Transverse colon (tissue), 4 donors: ENCODE measurements at regions of chr5 and their contacts with region 1.

Region 1: DNA sequence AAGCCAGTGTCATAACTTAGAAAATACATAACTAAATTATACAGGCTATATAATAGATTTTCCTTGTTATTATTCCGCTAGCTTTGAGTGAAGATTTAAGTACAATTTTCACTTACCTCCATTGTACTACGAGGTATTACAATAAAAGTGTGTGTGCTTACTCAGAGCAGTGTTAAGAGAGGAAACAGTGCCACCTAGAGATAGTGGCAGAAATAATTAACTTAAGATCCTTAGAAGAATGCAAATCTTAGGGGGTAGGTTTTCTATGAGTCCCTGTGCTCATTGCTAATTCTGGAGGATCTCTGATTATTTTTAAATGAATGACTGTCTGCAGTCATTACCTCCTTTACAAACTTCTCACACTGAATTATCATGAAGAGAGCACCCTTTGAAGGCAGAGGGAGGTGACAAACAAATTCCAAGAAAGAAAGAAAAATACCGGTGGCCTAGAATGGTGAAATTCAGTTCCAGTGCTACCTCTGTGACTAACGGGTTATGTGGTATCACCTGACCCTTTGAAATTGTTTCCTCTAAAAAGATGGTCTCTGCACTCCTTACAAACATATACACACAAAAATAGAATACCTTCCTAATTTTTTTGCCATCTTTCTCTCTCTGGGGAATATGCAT is 379.8 kb downstream of the TRIM36 start:
- DNase-seq: no peak
- H3K4me3 ChIP-seq: no peak overlapping the region
- H3K27ac ChIP-seq: no peak overlapping the region
- H3K4me1 ChIP-seq: no peaks in the 10 kb centered on the region
- H3K27me3 ChIP-seq: no peaks in the 10 kb centered on the region
- CTCF ChIP-seq: peak in 4 of 5 experiments; percentile 12 to 30 (median 22)
- EP300 ChIP-seq: no peak
- POLR2A ChIP-seq: no peak

Region 2: DNA sequence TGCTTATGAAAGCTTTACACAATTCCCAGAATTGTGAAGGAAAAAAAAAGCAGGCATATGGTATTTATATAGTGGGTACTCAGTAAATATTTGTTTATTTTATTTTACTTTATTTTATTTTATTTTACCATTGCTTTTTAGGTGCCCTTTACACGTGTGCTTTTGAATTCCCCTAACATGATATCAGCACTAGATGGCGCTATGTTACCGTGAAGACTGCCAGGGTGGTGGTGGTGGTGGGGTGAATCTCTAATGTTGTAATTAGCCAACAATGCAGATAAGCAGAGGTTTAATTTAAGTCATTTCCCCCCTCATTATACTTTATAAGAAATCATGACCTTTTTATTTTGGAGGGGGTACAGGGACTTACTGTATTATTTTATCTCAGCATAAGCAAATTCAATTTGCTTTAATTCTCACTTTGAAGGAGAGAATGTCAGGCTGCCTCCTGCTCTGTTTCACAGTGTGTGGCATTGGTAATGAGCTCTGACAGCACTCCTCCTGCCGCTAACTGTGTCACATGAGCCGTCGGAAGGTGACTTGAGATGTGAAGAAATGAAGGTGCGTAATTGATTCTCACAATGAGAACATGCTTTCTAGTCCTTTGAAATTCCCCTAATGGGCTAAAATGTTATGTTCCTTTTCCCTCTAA is 1110.8 kb before region 1 on chr5:
- in situ Hi-C with region 1: loop called in 1 of 4 experiments (anchors 25 kb)
- intact Hi-C with region 1: no loop called
- DNase-seq: peak; percentile 9
- H3K4me3 ChIP-seq: no peak overlapping the region
- H3K27ac ChIP-seq: no peak overlapping the region
- H3K4me1 ChIP-seq: no peaks in the 10 kb centered on the region
- H3K27me3 ChIP-seq: no peaks in the 10 kb centered on the region
- CTCF ChIP-seq: peak; percentile 59 to 68 (median 66)
- EP300 ChIP-seq: no peak
- POLR2A ChIP-seq: no peak

Region 3: DNA sequence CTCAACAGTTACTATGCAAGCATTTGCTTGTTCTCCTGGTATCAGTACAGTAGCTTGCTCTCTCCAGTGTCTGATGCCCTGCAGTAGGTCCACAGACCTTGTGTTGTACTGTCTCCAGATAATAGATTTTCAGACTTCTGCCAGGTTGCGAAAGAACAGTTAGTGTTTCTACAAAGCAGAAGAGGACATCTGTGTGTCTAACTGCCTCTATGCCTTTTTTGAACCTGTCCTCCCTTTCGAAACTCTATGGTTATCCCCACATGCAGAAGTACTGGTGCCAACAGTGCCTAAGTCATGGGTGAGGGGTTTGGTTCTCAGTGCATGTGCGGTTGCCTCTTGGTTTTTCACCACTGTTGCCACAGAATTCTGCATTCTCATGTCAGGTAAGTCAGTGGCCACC is 382.1 kb before region 1 on chr5:
- in situ Hi-C with region 1: no loop called
- intact Hi-C with region 1: no loop called
- DNase-seq: no peak
- H3K4me3 ChIP-seq: no peak overlapping the region
- H3K27ac ChIP-seq: no peak overlapping the region
- H3K4me1 ChIP-seq: peaks cover 0 to 3% (median 0%) of the 10 kb centered on the region in 4 donors
- H3K27me3 ChIP-seq: no peaks in the 10 kb centered on the region
- CTCF ChIP-seq: no peak
- EP300 ChIP-seq: no peak
- POLR2A ChIP-seq: no peak